PC-3 (cell line): ENCODE measurements at regions of chr7 and their contacts with region 1.

Region 1: GRCh38 chr7:42690794-42691639 is 220.9 kb downstream of the C7orf25 start:
- DNase-seq: peak; percentile 73
- ATAC-seq: peak; percentile 93
- H3K4me3 ChIP-seq: no peak overlapping the region
- H3K27ac ChIP-seq: no peak overlapping the region
- H3K4me1 ChIP-seq: peaks cover 4% of the 10 kb centered on the region; the same call in 1 of the 2 replicates
- H3K27me3 ChIP-seq: no peaks in the 10 kb centered on the region
- CTCF ChIP-seq: peak; percentile 78

Region 2: GRCh38 chr7:41977151-41977651 is 713.8 kb before region 1 on chr7:
- CTCF ChIA-PET with region 1: no interaction called
- POLR2A ChIA-PET with region 1: no interaction called
- intact Hi-C with region 1: loop called (anchors 2 kb)
- DNase-seq: peak; percentile 67
- ATAC-seq: peak; percentile 67
- H3K4me3 ChIP-seq: no peak overlapping the region
- H3K27ac ChIP-seq: no peak overlapping the region
- H3K4me1 ChIP-seq: peaks cover 9% of the 10 kb centered on the region
- H3K27me3 ChIP-seq: no peaks in the 10 kb centered on the region
- CTCF ChIP-seq: peak; percentile 84

Region 3: GRCh38 chr7:42014625-42015546 is 676.1 kb before region 1 on chr7:
- CTCF ChIA-PET with region 1: no interaction called
- POLR2A ChIA-PET with region 1: no interaction called
- intact Hi-C with region 1: loop called (anchors 2 kb)
- DNase-seq: peak; percentile 79
- ATAC-seq: peak; percentile 83
- H3K4me3 ChIP-seq: no peak overlapping the region
- H3K27ac ChIP-seq: no peak overlapping the region; the same call in 1 of the 2 replicates
- H3K4me1 ChIP-seq: peaks cover 11% of the 10 kb centered on the region
- H3K27me3 ChIP-seq: no peaks in the 10 kb centered on the region
- CTCF ChIP-seq: peak; percentile 95

Region 4: DNA sequence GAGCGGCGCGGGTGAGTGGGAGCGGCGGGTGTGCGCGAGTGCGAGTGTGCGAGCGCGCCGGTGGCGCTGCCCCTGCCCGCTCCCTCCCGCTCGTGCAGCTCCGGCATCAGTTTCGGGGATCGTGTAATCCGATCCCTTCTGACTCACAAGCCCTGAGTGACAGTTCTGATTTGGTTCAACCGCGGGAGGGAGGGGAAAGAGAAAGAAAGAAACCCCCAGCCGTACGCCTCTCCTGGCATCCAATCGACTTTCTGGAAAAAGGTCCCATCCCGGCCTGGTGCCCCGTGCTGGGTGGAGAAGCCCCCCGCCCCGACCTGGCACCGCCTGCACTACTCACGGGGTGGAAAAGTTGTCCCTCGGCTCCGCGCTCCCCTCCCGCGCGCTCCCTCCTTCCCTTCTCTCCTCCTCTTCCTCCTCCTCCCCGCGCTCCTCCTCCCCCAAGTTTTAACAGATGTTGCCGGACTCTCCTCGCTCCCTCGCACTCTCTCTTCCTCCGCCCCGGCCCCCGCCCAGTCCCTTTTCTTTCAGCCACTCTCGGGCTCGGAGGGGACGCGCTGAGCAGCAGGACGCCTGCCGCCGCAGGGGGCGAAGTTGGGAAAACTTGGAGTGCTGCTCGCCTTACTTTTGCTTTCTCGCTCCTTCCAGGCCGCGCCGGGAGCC is 453.7 kb before region 1 on chr7 and contains the start of gene GLI3:
- CTCF ChIA-PET with region 1: no interaction called
- POLR2A ChIA-PET with region 1: no interaction called
- intact Hi-C with region 1: loop called (anchors 2 kb)
- DNase-seq: peak; percentile 88
- ATAC-seq: peak; percentile 72
- H3K4me3 ChIP-seq: peak within 1 kb of the TSS; percentile 92
- H3K27ac ChIP-seq: peak within 1 kb of the TSS; percentile 65
- H3K4me1 ChIP-seq: peaks cover 39% of the 10 kb centered on the region
- H3K27me3 ChIP-seq: no peaks in the 10 kb centered on the region
- CTCF ChIP-seq: no peak
- total RNA-seq, gene GLI3: 3.5 and 9.6 TPM in 2 replicates

Region 5: DNA sequence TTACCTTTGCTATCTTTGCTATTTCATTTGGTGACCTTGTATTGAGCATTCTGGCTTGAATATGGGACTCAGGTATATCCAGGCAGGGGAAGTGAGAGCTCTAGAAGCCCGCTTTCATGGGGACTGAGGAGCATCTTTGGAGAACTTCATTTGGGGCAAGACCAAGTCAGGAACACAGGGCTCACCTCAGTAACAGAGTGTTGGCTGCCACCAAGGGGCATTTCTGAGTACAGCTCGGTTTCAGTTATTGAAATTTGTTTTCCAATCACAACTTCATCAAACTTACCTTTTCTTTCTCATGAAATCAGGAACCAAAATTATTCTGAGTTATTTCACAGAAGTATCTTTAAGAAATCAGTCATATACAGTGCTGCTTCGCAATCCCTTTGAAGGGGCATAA is 116.3 kb before region 1 on chr7:
- CTCF ChIA-PET with region 1: interaction called, 5 read pairs
- POLR2A ChIA-PET with region 1: no interaction called
- intact Hi-C with region 1: loop called (anchors 2 kb)
- DNase-seq: peak; percentile 34
- ATAC-seq: peak; percentile 80
- H3K4me3 ChIP-seq: no peak overlapping the region
- H3K27ac ChIP-seq: no peak overlapping the region
- H3K4me1 ChIP-seq: peaks cover 9% of the 10 kb centered on the region
- H3K27me3 ChIP-seq: no peaks in the 10 kb centered on the region
- CTCF ChIP-seq: peak; percentile 67

Region 6: DNA sequence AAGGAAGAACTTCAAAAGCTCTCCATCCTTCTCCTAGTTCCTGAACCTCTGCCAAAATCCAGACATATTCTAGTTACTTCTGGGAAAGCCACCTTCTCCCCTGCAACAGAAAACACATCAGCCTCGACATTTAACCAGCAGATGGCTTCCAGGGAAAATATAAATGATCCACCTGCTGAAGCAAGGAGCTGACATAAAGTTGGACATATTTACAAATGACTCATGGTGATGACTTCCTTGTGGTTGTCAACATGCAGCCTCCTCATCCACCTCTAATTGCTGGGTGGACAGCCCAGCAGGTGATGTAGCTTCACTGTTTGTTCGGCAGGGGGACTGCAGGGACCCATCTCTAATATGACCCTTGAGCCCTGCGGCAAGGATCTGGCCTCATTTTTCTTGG is 45.1 kb before region 1 on chr7:
- CTCF ChIA-PET with region 1: interaction called, 7 read pairs
- POLR2A ChIA-PET with region 1: no interaction called
- intact Hi-C with region 1: loop called (anchors 1 kb)
- DNase-seq: peak; percentile 74
- ATAC-seq: peak; percentile 97
- H3K4me3 ChIP-seq: no peak overlapping the region
- H3K27ac ChIP-seq: no peak overlapping the region
- H3K4me1 ChIP-seq: 0 out of 2 replicates have a peak, but pooled peaks cover 11% of the 10 kb centered on the region
- H3K27me3 ChIP-seq: no peaks in the 10 kb centered on the region
- CTCF ChIP-seq: peak; percentile 57

Region 7: DNA sequence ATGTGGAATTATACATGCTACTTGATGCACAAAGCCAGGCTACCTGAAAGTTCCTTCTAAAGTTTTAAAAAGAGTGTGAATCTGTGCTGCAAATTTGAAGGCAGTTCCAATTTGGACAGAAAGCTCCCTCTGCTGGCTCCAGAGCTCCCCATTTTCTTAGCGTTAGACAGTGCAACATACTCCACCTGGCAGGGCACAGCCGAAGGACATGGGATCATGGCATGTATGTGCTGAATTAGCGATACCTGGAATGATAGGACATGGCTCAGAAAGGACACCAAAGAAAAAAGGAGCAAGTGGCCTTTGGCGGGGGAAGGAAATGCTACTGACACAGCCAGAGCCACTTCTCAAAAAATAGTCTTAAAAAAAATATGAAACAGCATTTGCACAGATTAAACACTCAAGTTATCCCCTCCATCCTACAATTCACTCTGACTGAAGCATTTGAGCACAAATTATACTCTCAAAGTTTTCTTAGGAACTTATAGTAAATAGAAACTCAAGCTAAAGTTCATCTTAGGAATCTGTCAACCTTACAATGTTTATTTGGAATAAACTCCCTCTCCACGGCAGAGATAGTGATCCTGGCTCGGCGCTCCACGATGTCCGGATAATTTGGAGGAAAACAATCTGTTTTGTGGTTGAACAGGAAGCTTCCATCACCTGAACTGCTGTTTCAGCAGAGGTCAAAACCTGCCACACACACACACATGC is 140.9 kb after region 1 on chr7:
- CTCF ChIA-PET with region 1: no interaction called
- POLR2A ChIA-PET with region 1: no interaction called
- intact Hi-C with region 1: loop called (anchors 1 kb)
- DNase-seq: peak; percentile 70
- ATAC-seq: peak; percentile 97
- H3K4me3 ChIP-seq: peak overlapping the region; percentile 50
- H3K27ac ChIP-seq: no peak overlapping the region
- H3K4me1 ChIP-seq: peaks cover 17% of the 10 kb centered on the region; the same call in 1 of the 2 replicates
- H3K27me3 ChIP-seq: no peaks in the 10 kb centered on the region; the same call in 1 of the 2 replicates
- CTCF ChIP-seq: peak; percentile 87

Region 8: DNA sequence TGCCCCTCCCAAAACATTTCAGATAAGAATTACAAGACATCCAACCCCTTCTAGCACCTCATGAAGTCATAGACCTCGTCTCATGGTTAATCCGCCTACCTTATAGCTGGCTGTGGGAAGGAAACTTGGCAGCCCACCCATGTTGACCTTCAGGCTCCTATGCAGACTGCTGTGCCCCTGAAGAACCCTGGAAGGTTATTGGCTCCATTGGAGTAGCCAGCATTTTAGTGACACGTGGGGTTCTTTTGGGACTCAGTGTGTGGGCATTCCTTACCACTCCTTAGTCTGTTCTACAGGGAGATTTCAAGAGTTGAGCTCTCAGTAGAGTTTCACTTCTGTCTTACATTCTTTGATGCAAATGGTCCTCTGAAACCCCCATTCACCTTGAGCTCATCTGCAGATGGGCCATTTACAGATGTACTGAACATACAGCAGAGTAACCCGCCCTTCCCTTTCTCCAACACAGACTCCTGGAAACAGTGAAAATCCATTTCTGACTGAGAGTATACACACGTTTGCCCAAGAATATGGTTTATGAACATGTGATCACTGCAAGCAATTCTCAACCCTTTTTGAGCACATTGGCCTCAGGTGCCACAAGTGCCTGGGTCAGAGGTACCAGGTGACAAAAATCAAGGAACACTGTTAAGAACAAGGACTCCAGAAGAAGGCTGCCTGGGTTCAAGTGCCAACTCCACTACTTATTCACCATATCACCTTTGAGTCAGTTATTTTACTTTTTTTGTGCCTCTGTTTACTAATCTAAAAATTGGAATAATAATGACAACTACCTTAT is 367.5 kb after region 1 on chr7:
- CTCF ChIA-PET with region 1: no interaction called
- POLR2A ChIA-PET with region 1: no interaction called
- intact Hi-C with region 1: no loop called
- DNase-seq: no peak
- ATAC-seq: peak; percentile 59
- H3K4me3 ChIP-seq: peak overlapping the region; percentile 62
- H3K27ac ChIP-seq: 0 out of 2 replicates have a peak overlapping the region, but pooled peaks have one; percentile 1
- H3K4me1 ChIP-seq: peaks cover 7% of the 10 kb centered on the region; the same call in 1 of the 2 replicates
- H3K27me3 ChIP-seq: no peaks in the 10 kb centered on the region
- CTCF ChIP-seq: no peak